Heart left ventricle (tissue), 16 donors: ENCODE measurements at regions of chr14 and their contacts with region 1.

Region 1: DNA sequence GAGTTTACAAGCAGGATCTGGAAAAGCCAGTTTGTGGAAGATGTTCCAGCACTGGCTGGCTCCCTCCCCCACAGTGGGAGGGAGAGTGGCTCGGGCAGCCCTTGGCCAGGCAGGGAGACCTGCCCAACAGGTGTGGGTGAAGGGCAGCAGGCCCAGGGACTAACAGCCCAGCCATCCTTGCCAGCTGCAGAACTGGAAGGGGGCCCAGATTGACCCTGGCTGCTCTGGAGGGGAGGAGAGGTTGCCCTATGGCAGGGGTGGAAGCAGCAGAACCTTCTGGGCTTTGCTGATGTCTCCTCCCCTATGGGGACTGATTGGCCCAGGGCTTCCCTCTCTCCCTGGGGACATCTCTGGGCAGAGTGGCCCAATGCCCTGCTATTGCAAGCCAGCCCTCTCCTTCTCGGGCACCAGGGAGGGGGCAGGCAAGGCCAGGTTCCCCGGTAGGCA is 20.5 kb downstream of the IRF2BPL start:
- DNase-seq: peak; percentile 56 to 83 (median 62)
- ATAC-seq: peak; percentile 67 to 88 (median 84)
- H3K4me3 ChIP-seq: no peak overlapping the region
- H3K27ac ChIP-seq: peak overlapping the region in 11 of 12 donors; percentile 30 to 68 (median 42)
- H3K4me1 ChIP-seq: peaks cover 0 to 23% (median 14%) of the 10 kb centered on the region in 12 donors
- H3K27me3 ChIP-seq: no peaks in the 10 kb centered on the region
- CTCF ChIP-seq: no peak
- POLR2A ChIP-seq: no peak

Region 2: DNA sequence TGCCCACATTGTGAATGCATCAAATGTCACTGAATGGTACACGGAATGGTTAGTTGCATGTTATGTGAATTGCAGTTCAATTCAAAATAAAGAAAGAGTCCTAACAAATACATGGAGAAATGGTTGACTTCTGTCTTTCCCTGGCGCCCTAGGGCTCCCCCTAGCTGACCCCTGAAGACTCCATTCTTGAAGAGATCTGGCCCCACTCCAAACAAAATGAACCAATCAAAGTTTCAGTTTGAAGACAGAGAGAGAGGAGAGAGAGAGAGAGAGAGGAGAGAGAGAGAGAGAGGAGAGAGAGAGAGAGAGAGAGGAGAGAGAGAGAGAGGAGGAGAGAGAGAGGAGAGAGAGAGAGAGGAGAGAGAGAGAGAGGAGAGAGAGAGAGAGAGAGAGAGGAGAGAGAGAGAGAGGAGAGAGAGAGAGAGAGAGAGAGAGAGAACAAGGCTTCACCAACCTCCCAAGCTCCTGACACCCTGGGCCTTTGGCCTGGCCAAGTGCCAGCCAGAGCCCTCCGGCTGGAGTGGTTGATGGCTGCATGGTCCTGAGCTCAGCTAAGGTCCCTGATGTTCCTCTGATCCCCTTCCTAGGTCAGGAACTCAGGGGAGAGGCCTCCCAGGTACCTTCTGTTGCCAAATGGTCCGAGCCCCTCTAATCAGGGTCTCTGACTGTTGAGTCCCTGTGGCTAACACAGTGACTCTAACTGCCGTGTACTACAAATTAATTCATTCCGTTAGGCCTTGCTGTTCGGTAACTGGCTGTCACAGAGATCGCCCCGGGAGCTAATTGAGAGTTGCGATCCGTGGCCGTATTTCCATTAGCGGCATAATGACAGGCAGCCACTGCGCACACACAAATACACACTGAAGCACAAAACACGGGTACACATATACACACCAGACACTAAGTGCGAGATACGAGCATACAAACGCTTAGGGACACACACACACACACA is 443.3 kb before region 1 on chr14:
- intact Hi-C with region 1: no loop called
- DNase-seq: no peak
- ATAC-seq: no peak
- H3K4me3 ChIP-seq: no peak overlapping the region
- H3K27ac ChIP-seq: no peak overlapping the region
- H3K4me1 ChIP-seq: no peaks in the 10 kb centered on the region
- H3K27me3 ChIP-seq: no peaks in the 10 kb centered on the region
- CTCF ChIP-seq: no peak
- POLR2A ChIP-seq: no peak

Region 3: DNA sequence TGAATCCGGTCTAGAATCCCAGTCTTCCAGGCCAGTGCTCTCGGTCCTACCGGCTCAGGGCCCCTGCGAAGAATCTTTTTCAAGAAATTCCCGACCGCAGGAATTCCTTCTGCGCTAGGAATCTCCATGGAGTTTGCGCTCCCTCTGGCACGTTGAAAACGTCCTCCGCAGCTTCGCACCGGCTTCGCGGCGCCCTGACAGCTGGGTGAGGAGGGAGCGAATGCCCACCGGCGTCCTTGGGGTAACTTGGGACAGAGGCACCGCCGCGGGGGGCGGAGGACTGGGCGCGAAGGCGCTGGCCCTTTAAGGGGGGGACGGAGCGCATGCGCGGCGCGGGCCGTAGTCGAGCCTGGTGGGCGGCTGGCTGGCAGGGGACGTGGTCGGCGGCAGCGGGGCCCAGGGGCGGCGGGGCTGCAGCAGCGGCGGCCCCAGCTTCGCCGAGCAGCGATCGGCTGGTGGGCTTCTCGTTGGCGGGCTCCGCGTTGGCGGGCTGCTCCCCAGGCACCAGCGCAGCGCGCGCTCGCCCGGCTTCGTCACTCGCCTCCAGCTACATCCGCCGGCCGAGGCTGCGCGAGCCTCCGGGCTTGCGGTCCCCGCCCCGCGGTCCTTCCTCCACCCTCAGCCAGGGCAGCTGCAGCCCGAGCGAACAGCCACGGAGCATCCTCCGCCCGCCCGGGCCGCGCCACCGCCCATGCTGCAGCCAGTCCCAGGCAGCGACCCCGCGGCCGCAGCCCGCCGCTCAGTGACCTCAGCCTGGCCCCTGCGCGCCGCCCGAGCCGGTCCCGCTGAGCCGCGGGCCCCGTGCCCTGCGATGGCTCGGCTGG is 246.7 kb before region 1 on chr14 and contains the start of gene VASH1:
- intact Hi-C with region 1: no loop called
- DNase-seq: peak; percentile 74 to 91 (median 85)
- ATAC-seq: peak in 3 of 4 donors; percentile 74 to 85 (median 84)
- H3K4me3 ChIP-seq: peak within 1 kb of the TSS; percentile 51 to 98 (median 86)
- H3K27ac ChIP-seq: peak within 1 kb of the TSS; percentile 73 to 96 (median 89)
- H3K4me1 ChIP-seq: peaks cover 0 to 52% (median 39%) of the 10 kb centered on the region in 12 donors
- H3K27me3 ChIP-seq: peaks cover 0 to 6% (median 0%) of the 10 kb centered on the region in 9 donors
- CTCF ChIP-seq: no peak
- POLR2A ChIP-seq: peak in 1 of 2 donors; percentile 79
- total RNA-seq, gene VASH1: 7.8 to 30.8 (median 11.1) TPM

Region 4: DNA sequence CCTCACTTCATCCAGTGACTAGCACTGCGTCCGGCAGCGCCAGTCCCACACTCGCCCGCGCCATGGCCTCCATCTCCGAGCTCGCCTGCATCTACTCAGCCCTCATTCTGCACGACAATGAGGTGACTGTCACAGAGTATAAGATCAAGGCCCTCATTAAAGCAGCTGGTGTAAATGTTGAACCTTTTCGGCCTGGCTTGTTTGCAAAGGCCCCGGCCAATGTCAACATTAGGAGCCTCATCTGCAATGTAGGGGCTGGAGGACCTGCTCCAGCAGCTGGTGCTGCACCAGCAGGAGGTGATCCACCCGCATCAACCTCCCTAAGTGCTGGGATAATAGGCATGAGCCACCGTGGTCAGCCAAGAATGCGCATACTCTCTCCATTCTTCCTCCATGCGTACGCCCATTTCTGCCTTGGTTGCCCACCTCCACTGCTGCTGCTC is 39.4 kb before region 1 on chr14:
- intact Hi-C with region 1: loop called in 4 of 10 experiments (anchors 5 kb)
- DNase-seq: no peak
- ATAC-seq: no peak
- H3K4me3 ChIP-seq: no peak overlapping the region
- H3K27ac ChIP-seq: no peak overlapping the region
- H3K4me1 ChIP-seq: no peaks in the 10 kb centered on the region
- H3K27me3 ChIP-seq: no peaks in the 10 kb centered on the region
- CTCF ChIP-seq: no peak
- POLR2A ChIP-seq: no peak